Endothelial cell of umbilical vein (primary cell): ENCODE measurements at regions of chr18 and their contacts with region 1.

Region 1: DNA sequence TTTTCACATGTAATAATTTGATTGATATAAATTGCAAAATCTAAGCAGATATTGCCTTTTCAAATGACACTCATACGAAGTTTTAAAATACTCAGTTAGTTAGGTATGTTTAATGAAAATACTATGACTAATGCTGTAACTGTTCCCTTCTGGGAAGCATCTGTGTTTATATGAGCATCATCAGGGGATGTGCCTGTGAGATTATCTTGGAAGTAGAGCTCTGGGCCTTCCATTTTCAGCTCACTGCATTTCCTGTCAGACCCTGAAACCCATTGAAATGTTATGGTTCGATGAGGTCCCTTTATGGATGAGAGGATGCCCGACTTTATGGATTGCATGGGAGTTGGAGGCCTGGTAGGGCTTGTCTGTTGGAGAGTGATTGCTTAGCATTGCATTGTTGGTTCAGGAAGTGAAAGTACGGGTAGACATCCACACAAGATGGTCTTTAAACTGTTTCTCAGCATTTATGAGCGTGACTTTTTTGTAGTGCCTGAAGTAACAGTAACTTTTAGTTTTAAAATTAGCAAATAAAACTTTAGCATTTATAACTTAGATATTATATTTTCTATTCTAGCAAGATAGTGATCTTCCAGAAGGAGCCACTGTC is 28.7 kb downstream of the ELP2 start:
- DNase-seq: peak; percentile 93
- H3K4me3 ChIP-seq: no peak overlapping the region
- H3K27ac ChIP-seq: peak overlapping the region; percentile 74
- H3K4me1 ChIP-seq: peaks cover 34% of the 10 kb centered on the region
- H3K27me3 ChIP-seq: no peaks in the 10 kb centered on the region
- CTCF ChIP-seq: no peak
- POLR2A ChIP-seq: peak; percentile 49

Region 2: GRCh38 chr18:36035253-36035652 is 123.1 kb before region 1 on chr18:
- CTCF ChIA-PET with region 1: no interaction called
- POLR2A ChIA-PET with region 1: no interaction called
- dilution Hi-C with region 1: no loop called
- intact Hi-C with region 1: loop called (anchors 1 kb)
- DNase-seq: peak; percentile 94
- H3K4me3 ChIP-seq: no peak overlapping the region
- H3K27ac ChIP-seq: no peak overlapping the region
- H3K4me1 ChIP-seq: peaks cover 22% of the 10 kb centered on the region
- H3K27me3 ChIP-seq: no peaks in the 10 kb centered on the region
- CTCF ChIP-seq: no peak
- POLR2A ChIP-seq: peak; percentile 71

Region 3: DNA sequence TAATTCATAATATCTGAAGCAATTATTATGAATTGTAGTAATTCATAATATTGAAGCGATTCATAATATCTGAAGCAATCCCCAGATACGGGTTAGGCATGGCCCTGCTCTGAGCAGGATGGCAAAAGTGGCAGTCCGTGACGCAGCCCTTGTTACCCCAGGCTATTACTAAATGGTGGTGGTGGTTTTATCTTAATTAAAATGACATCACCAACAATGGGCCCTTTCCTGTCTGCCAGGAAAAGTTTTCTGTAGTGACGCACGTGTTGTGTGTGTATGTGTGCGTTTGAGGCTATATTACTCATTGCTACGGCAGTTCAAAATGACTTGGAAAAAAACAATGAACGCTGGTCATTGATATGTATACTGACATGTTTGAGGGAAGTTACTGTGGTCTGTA is 18.3 kb after region 1 on chr18:
- CTCF ChIA-PET with region 1: interaction called, 3 read pairs
- POLR2A ChIA-PET with region 1: no interaction called
- dilution Hi-C with region 1: no loop called
- intact Hi-C with region 1: loop called (anchors 1 kb)
- DNase-seq: peak; percentile 87
- H3K4me3 ChIP-seq: no peak overlapping the region
- H3K27ac ChIP-seq: peak overlapping the region; percentile 88
- H3K4me1 ChIP-seq: peaks cover 21% of the 10 kb centered on the region
- H3K27me3 ChIP-seq: no peaks in the 10 kb centered on the region
- CTCF ChIP-seq: no peak
- POLR2A ChIP-seq: peak; percentile 12

Region 4: DNA sequence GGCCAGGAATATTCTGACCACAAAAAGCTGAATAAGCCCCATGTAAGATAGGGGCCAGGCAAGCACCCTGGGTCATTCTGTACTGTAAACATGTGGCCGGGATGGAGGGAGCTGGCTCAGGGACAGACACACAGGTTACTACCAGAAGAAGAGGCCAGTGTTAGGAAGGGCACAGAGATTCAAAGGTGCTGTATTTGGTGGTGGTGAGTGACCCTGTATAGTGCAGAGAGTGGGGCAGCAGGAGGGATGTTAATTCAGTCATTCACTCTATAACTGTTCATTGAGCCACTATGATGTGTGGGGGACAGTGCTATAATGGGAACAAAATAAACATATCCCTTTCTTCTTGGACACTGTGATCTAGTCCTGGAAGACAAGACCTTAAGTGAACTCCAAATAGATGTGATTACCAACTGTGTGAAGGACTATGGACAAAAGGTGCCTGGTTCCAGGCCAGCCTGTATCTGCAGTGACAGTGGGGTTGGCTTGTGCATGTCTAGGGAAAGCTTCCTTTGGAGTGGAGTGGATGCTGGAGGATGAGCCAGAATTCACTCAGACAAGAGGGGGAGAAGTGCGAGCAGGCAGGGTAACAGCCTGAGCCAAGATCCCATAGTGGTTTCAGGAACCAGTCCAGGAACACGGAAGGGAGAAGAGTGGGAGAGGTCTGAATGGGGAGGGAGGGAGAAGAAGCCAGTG is 37.2 kb after region 1 on chr18:
- CTCF ChIA-PET with region 1: no interaction called
- POLR2A ChIA-PET with region 1: no interaction called
- dilution Hi-C with region 1: no loop called
- intact Hi-C with region 1: no loop called
- DNase-seq: no peak
- H3K4me3 ChIP-seq: no peak overlapping the region
- H3K27ac ChIP-seq: no peak overlapping the region
- H3K4me1 ChIP-seq: no peaks in the 10 kb centered on the region
- H3K27me3 ChIP-seq: peaks cover 0 to 2% of the 10 kb centered on the region in 2 experiments
- CTCF ChIP-seq: no peak
- POLR2A ChIP-seq: no peak